Motor neuron (in vitro differentiated cells): ENCODE measurements at regions of chr14 and their contacts with region 1.

Region 1: DNA sequence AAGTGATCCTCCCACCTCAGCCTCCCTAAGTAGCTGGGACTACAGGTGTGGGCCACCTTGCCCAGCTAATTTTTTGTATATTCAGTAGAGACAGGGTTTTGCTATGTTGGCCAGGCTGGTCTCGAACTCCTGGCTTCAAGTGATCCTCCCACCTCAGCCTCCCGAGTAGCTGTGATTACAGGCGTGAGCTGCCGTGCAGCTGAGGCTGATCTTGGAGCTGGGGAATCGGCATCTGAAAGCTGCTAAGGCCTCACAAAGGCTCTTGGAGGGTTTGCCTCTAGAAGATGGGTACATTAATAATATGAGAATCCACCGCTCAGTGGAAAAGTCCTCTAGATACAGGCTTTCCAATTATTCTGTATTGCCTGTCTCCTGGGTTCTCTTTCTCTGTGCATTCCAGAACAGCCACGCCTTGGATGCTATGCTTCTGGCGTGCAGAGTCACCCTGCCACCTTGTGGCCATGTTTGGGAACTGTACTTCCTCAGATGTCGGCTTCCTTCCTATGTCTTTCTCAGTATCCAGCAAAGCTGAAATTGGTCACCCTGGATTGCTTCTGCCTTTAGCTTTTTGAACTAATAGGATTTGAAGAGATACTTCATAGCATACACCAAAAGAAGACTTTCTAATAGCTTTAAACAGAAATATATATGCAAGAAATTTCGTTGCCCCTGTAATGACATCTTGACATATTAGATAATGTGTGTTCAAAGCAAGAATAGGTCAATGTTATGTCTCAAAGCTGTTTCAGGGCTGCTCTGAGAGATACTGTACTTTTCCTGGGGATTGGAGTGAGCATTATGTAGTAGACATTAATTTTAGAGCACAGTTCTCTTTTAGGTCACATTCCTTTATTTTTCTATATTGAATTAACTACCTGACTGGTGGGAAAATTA is 75.4 kb downstream of the SNAPC1 start:
- ATAC-seq: peak; percentile 79 to 98 (median 92)
- H3K4me3 ChIP-seq: no peak overlapping the region
- H3K27ac ChIP-seq: no peak overlapping the region
- H3K4me1 ChIP-seq: no peaks in the 10 kb centered on the region

Region 2: DNA sequence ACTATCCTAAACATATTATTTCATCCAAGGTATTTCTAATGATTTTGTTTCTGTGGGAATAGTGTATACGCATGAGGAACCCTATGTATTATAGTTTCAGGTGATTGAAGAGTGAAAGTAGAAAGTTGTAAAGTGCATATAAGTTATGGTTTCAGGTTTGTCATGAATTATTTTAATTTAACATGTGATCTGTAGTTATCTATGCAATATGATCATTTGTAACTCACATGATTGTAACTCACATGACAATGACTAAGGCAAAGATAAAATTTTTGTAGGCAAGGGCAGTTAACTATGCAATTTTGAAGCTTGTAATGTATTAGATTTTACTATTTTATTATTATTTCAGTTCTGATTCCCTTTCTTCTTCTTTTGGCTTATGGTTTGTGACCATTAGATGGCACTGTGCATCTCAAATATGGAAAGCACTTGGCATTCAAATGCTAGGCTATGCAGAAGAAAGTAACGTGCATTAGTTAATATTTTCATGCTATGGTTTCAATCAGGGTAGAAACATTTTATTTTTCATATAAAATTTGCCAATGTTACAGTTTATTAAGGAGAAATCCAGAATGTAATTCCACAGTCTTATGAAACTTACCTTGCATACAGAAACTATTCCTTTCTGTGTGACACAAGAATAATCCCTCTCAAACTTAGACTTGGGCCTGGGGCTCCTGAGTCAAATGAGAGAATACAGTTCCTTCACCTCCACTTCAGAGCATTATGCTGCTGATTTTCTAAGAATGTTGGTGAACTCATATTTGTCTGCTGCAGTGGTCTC is 540.7 kb before region 1 on chr14:
- in situ Hi-C with region 1: loop called in 2 of 9 experiments (anchors 25 kb)
- ATAC-seq: peak in 3 of 8 experiments; percentile 59 to 79 (median 79)
- H3K4me3 ChIP-seq: no peak overlapping the region
- H3K27ac ChIP-seq: no peak overlapping the region
- H3K4me1 ChIP-seq: no peaks in the 10 kb centered on the region

Region 3: GRCh38 chr14:61461808-61462275 is 375.7 kb before region 1 on chr14:
- in situ Hi-C with region 1: loop called (anchors 10 to 25 kb)
- ATAC-seq: peak; percentile 21 to 63 (median 38)
- H3K4me3 ChIP-seq: no peak overlapping the region
- H3K27ac ChIP-seq: no peak overlapping the region
- H3K4me1 ChIP-seq: peaks cover 20 to 25% of the 10 kb centered on the region in 2 donors

Region 4: GRCh38 chr14:61493239-61493638 is 344.3 kb before region 1 on chr14:
- in situ Hi-C with region 1: no loop called
- ATAC-seq: peak in 3 of 8 experiments; percentile 56 to 65 (median 64)
- H3K4me3 ChIP-seq: no peak overlapping the region
- H3K27ac ChIP-seq: no peak overlapping the region
- H3K4me1 ChIP-seq: peaks cover 10% of the 10 kb centered on the region in 2 donors

Region 5: DNA sequence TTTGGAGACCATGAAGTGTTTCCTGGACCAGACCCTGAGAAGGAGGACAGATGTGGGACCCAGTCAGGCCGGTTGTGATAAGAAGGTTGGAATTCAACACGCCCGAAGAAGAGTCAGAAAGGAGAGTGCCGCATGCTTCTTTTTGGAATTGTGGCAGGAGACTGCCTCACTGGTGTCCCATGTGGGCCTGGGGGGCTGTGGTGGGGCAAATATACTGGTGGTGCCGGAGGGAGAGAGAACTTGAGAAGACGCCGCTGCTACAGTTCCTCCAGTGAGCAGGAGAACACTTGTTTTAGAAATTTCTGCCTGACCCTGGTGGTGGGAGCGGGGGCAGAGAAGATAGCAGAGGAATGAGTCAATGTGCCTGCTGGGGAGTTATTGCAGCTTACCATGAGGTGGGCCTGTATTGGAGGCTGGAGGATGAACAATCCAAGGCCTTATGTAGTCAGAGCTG is 136.3 kb after region 1 on chr14:
- in situ Hi-C with region 1: no loop called
- ATAC-seq: no peak
- H3K4me3 ChIP-seq: no peak overlapping the region
- H3K27ac ChIP-seq: no peak overlapping the region
- H3K4me1 ChIP-seq: peaks cover 2 to 6% of the 10 kb centered on the region in 2 donors

Region 6: DNA sequence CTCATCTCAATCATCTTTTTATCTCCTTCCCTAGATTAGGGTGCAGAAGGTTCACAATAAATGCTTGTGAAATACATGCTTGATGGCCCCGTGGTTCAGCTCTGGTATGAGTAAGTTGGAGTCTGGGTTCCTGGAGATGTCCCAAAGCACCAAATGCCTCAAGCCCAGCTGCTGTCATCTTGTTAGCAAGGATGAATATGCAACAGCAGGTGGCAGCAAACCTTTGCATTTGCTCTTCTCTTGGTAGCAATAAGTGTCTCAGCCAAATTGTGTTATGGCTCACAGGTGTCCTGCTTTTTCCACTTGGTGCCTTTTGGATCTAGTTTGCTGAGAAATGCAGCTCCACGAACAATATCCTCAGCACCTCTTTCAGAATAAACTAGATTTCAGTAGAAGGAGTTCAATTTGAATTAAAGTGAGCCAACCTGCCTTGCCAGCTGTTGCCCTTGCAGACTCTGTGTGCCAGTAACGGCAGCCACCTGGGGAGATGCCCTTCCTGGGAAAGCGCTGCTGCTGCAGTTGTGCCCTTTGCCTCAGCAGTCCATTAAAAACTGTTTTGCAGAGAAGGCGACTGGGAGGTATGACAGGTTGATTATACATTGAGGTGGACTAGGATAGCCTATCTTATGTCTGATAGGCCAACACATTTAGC is 341.9 kb after region 1 on chr14:
- in situ Hi-C with region 1: no loop called
- ATAC-seq: peak; percentile 47 to 91 (median 63)
- H3K4me3 ChIP-seq: no peak overlapping the region
- H3K27ac ChIP-seq: no peak overlapping the region
- H3K4me1 ChIP-seq: no peaks in the 10 kb centered on the region